ENCODE measurements at regions of chr5 and their contacts with region 1.

Region 1: GRCh38 chr5:134304311-134304710 is 62.7 kb downstream of the CDKL3 start:
- DNase-seq: no peak
- H3K4me3 ChIP-seq: no peak overlapping the region
- H3K27ac ChIP-seq: no peak overlapping the region
- H3K4me1 ChIP-seq: no peaks in the 10 kb centered on the region
- H3K27me3 ChIP-seq: no peaks in the 10 kb centered on the region
- CTCF ChIP-seq: no peak
- POLR2A ChIP-seq: no peak

Region 2: DNA sequence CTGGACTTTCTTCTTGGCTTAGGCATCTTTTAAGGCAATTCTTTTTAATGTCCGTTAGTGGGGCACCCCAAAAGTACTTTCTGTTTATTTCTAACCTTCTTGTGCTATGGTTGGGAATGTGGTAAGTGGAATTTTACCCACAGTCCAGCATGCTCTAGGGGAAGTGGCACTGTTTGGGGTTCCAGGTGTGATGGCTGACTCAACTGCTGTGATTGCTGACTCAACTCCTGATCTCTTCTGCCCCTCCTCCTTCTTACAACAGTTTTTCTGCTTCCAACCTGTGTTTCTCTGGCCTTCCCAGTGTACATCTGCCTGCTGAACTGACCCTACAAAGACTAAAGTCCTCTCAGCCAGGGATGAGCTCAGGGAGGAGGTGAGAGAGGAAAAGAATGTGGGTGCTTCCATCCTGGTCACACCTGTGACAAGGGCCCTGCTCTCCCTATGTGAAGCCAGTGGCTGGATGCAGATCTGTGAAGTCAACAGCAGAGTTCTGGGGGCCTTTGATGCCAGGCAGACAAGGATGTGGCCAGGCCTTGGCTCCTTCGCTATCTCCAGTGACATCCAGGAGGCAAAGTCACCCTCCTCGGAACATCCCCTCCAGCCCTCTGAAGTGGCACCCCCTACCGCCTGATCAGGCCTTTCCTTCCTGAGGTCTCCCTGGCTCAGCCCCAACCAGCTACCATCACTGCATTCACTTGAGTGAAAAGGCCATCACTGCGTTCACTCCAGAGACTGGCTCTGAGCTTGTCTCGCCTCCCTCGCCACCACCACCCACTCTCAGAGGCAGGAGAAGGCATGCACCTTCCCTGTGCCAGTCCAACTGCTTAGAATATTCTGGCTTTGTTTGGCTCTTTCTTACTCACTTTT is 408.1 kb before region 1 on chr5:
- intact Hi-C with region 1: no loop called
- DNase-seq: no peak
- H3K4me3 ChIP-seq: no peak overlapping the region
- H3K27ac ChIP-seq: no peak overlapping the region
- H3K4me1 ChIP-seq: no peaks in the 10 kb centered on the region
- H3K27me3 ChIP-seq: no peaks in the 10 kb centered on the region
- CTCF ChIP-seq: no peak
- POLR2A ChIP-seq: no peak

Region 3: GRCh38 chr5:134365604-134366003 is 61.3 kb after region 1 on chr5:
- intact Hi-C with region 1: no loop called
- DNase-seq: no peak
- H3K4me3 ChIP-seq: no peak overlapping the region
- H3K27ac ChIP-seq: no peak overlapping the region
- H3K4me1 ChIP-seq: no peaks in the 10 kb centered on the region
- H3K27me3 ChIP-seq: no peaks in the 10 kb centered on the region
- CTCF ChIP-seq: no peak
- POLR2A ChIP-seq: no peak

Region 4: GRCh38 chr5:134533115-134533815 is 229.0 kb after region 1 on chr5:
- intact Hi-C with region 1: loop called (anchors 10 kb)
- DNase-seq: no peak
- H3K4me3 ChIP-seq: no peak overlapping the region
- H3K27ac ChIP-seq: no peak overlapping the region
- H3K4me1 ChIP-seq: no peaks in the 10 kb centered on the region
- H3K27me3 ChIP-seq: no peaks in the 10 kb centered on the region
- CTCF ChIP-seq: no peak
- POLR2A ChIP-seq: no peak

Region 5: GRCh38 chr5:134586866-134587524 is 282.7 kb after region 1 on chr5:
- intact Hi-C with region 1: loop called (anchors 2 kb)
- DNase-seq: peak; percentile 63
- H3K4me3 ChIP-seq: no peak overlapping the region
- H3K27ac ChIP-seq: no peak overlapping the region
- H3K4me1 ChIP-seq: no peaks in the 10 kb centered on the region
- H3K27me3 ChIP-seq: no peaks in the 10 kb centered on the region
- CTCF ChIP-seq: peak; percentile 56 to 74 (median 65)
- POLR2A ChIP-seq: no peak

Measured in prostate gland (tissue), 2 donors.